ENCODE measurements at regions of chr9 and their contacts with region 1.

Region 1: DNA sequence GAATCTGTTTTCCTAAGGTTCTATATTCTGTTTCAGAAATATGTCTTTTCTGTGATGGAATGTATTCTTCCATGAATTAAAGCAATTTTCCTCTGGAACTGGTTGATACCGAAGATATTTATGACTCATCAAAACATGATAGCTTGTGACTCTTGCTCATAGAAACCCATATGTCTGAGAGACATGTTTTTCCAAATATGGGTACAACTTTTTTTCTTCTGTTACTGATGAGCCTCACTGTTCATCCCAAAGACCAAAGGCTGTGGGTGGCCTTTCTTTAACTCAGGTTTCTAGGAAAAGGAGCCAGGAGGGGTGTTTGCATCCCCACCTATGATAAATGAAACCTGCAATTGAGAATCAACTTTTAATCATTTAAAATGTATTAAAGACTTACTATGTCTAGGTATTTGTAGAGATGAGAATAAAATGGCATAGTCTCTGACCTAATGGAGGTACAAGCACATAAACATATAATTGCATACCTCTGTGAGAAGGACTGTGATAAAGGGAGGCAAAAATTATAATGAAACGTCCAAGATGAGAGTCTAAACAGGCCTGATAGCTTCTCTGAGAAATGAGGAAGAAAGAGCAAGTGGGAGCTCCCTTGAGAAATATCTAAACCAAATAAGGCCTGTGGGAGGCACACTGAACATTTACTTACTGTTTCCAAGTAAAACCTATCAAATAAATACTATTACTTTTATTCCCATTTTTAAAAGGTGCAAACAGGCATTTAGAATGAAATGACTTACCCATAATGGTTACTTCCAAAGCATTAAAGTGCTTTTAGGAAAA is 125.8 kb upstream of the PAPPA start:
- DNase-seq: no peak
- ATAC-seq: no peak
- H3K4me3 ChIP-seq: no peak overlapping the region
- H3K27ac ChIP-seq: no peak overlapping the region
- H3K4me1 ChIP-seq: no peaks in the 10 kb centered on the region
- H3K27me3 ChIP-seq: no peaks in the 10 kb centered on the region
- CTCF ChIP-seq: no peak

Region 2: GRCh38 chr9:115913696-115914095 is 114.1 kb before region 1 on chr9:
- intact Hi-C with region 1: loop called in 1 of 3 experiments (anchors 5 kb)
- DNase-seq: no peak
- ATAC-seq: no peak
- H3K4me3 ChIP-seq: no peak overlapping the region
- H3K27ac ChIP-seq: no peak overlapping the region
- H3K4me1 ChIP-seq: no peaks in the 10 kb centered on the region
- H3K27me3 ChIP-seq: no peaks in the 10 kb centered on the region
- CTCF ChIP-seq: no peak

Region 3: GRCh38 chr9:115957585-115957984 is 70.2 kb before region 1 on chr9:
- intact Hi-C with region 1: no loop called
- DNase-seq: no peak
- ATAC-seq: no peak
- H3K4me3 ChIP-seq: no peak overlapping the region
- H3K27ac ChIP-seq: no peak overlapping the region
- H3K4me1 ChIP-seq: no peaks in the 10 kb centered on the region
- H3K27me3 ChIP-seq: no peaks in the 10 kb centered on the region
- CTCF ChIP-seq: no peak

Region 4: GRCh38 chr9:115978659-115979096 is 49.1 kb before region 1 on chr9:
- intact Hi-C with region 1: no loop called
- DNase-seq: peak in 2 of 6 donors; percentile 4 to 14
- ATAC-seq: peak in 2 of 4 donors; percentile 50 to 57
- H3K4me3 ChIP-seq: no peak overlapping the region
- H3K27ac ChIP-seq: no peak overlapping the region
- H3K4me1 ChIP-seq: peaks cover 3 to 9% (median 7%) of the 10 kb centered on the region in 3 donors
- H3K27me3 ChIP-seq: no peaks in the 10 kb centered on the region
- CTCF ChIP-seq: no peak

Region 5: DNA sequence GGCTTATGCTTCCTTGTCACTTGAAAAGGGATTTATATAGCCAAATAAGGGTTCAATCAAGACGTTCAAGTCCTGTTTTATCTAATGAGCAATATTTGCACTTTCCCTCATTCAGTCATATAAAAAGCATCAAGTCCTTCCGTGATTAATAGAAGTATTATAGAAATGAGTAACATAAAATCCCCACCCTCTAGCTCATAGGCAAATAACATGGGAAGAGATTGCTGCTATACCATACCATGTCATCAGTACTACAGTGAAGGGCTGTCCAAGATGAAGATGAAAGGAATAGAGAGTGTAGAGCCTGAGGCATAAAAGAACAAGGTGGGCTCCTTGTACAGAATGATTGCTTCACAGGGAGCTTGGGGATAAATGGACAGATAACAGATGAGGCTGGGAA is 105.4 kb after region 1 on chr9:
- intact Hi-C with region 1: no loop called
- DNase-seq: no peak
- ATAC-seq: no peak
- H3K4me3 ChIP-seq: no peak overlapping the region
- H3K27ac ChIP-seq: no peak overlapping the region
- H3K4me1 ChIP-seq: no peaks in the 10 kb centered on the region
- H3K27me3 ChIP-seq: no peaks in the 10 kb centered on the region
- CTCF ChIP-seq: no peak